WTC11 (cell line): ENCODE measurements at regions of chr16 and their contacts with region 1.

Region 1: DNA sequence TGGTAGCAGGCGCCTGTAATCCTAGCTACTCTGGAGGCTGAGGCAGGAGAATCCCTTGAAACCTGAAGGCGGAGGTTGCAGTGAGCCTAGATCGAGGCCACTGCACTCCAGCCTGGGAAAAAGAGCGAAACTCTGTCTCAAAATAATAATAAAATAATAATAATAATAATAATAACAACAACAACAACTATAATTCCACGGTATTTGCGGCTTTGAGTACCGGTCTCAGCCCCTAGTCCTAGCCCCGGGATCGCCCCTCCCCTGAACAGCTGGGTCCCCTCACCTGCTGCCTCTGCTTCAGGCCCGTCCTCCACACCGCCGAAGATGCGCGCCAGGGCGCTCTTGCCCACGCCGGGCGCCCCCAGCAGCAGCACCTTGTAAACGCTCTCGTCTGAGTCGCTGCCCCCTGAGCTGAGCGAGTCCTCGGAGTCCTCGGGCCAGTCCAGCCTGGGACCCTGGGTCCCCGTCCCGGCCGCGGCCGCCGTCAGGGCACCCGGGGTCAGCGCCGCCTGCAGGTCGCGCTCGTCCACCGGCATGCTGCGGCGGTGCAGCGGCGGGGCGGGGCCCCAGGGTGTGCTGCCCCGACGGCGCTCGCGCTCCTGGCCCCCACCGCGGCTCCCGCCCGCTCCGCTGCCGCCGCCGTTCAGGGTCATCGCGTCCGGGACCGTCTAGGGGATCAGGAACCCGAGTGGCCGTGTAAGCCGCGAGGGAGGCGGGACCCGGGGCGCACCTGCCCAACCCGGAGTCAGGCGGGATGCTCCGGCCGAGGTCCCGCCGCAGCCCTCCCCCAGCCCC is 611 bp downstream of the RRAD start:
- DNase-seq: peak; percentile 74
- ATAC-seq: peak; percentile 85
- H3K4me3 Mint-ChIP-seq: peak overlapping the region; percentile 73
- H3K27ac Mint-ChIP-seq: no peak overlapping the region
- H3K4me1 Mint-ChIP-seq: peaks cover 7% of the 10 kb centered on the region; the same call in 1 of the 2 replicates
- H3K27me3 Mint-ChIP-seq: peaks cover 59% of the 10 kb centered on the region
- CTCF ChIP-seq: no peak

Region 2: DNA sequence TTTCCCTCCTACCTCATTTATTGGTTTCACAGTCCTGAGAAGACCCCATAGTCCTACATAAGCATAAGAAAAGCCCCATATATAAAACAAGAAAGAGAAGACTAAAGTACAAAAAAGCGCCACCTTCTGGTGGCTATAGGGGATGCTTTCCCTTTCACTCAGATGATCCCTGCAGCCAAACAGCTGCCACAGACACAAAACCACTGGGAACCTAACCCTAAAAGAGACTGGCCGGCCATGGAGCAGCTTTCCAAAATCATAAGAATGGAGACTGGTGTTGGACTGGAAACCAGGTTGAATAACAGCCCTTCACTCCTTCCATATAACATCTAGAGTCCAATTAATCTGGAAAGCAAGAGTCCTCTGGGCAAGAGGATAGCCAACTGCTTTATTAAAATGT is 184.7 kb before region 1 on chr16:
- CTCF ChIA-PET with region 1: no interaction called
- POLR2A ChIA-PET with region 1: no interaction called
- DNase-seq: peak; percentile 40
- ATAC-seq: peak; percentile 85
- H3K4me3 Mint-ChIP-seq: no peak overlapping the region
- H3K27ac Mint-ChIP-seq: peak overlapping the region; percentile 90
- H3K4me1 Mint-ChIP-seq: peaks cover 18% of the 10 kb centered on the region
- H3K27me3 Mint-ChIP-seq: no peaks in the 10 kb centered on the region
- CTCF ChIP-seq: peak; percentile 61

Region 3: GRCh38 chr16:66880288-66881013 is 44.3 kb before region 1 on chr16 and contains the start of gene PDP2:
- CTCF ChIA-PET with region 1: interaction called, 17 read pairs
- POLR2A ChIA-PET with region 1: no interaction called
- DNase-seq: peak; percentile 97
- ATAC-seq: peak; percentile 99
- H3K4me3 Mint-ChIP-seq: peak within 1 kb of the TSS; percentile 95
- H3K27ac Mint-ChIP-seq: peak within 1 kb of the TSS; percentile 93
- H3K4me1 Mint-ChIP-seq: peaks cover 9% of the 10 kb centered on the region
- H3K27me3 Mint-ChIP-seq: peaks cover 11% of the 10 kb centered on the region
- CTCF ChIP-seq: no peak
- total RNA-seq, gene PDP2: 26.4 to 28.4 TPM (median 27.0 TPM) in 3 replicates

Region 4: GRCh38 chr16:66905633-66906539 is 18.8 kb before region 1 on chr16:
- CTCF ChIA-PET with region 1: interaction called, 57 read pairs
- POLR2A ChIA-PET with region 1: no interaction called
- DNase-seq: peak; percentile 55
- ATAC-seq: peak; percentile 90
- H3K4me3 Mint-ChIP-seq: no peak overlapping the region
- H3K27ac Mint-ChIP-seq: peak overlapping the region; percentile 88
- H3K4me1 Mint-ChIP-seq: peaks cover 5% of the 10 kb centered on the region; the same call in 1 of the 2 replicates
- H3K27me3 Mint-ChIP-seq: peaks cover 15% of the 10 kb centered on the region
- CTCF ChIP-seq: no peak

Region 5: GRCh38 chr16:66911112-66911511 is 13.6 kb before region 1 on chr16:
- CTCF ChIA-PET with region 1: interaction called, 57 read pairs
- POLR2A ChIA-PET with region 1: no interaction called
- DNase-seq: no peak
- ATAC-seq: no peak
- H3K4me3 Mint-ChIP-seq: no peak overlapping the region
- H3K27ac Mint-ChIP-seq: no peak overlapping the region
- H3K4me1 Mint-ChIP-seq: no peaks in the 10 kb centered on the region
- H3K27me3 Mint-ChIP-seq: peaks cover 13% of the 10 kb centered on the region
- CTCF ChIP-seq: no peak

Region 6: DNA sequence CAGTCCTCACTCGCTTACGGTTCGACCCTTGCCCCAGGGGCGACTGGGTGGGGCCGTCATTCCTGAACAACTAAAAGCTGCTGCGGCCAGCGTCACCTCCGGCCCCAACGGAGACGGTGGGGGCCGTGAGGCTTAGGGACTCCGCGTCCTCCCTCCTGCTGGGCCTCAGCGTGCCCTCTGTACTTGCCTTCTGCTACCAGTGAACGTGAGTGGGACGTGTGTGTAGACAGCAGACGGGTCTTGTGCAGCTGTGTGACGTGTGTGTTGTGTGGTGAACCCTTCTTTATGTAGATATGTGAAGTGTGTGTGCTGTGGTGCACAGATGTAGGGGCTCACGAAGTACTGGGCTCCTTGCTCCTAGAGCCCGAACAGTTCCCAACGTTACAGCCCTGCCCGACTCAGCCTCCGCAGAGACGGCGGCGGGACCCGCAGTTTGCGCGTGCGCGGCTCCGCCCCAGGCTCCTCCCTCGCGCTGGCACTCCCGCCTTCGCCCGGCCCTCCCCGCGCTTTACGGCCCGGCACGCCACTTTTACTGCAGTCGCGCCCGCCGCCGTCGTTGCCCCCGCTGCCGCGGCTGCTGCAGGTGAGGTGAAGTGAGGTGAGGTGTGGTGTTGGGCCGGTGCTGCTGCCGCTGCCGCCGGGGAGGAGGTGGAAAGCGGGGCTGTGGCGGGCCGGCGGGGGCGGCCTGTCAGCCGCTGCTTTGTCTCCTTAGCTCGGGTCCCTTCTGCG is 184.8 kb after region 1 on chr16 and contains the start of gene PHAF1:
- CTCF ChIA-PET with region 1: no interaction called
- POLR2A ChIA-PET with region 1: no interaction called
- DNase-seq: peak; percentile 98
- ATAC-seq: peak; percentile 96
- H3K4me3 Mint-ChIP-seq: peak within 1 kb of the TSS; percentile 99
- H3K27ac Mint-ChIP-seq: peak within 1 kb of the TSS; percentile 93
- H3K4me1 Mint-ChIP-seq: peaks cover 17% of the 10 kb centered on the region
- H3K27me3 Mint-ChIP-seq: 0 out of 2 replicates have a peak, but pooled peaks cover 5% of the 10 kb centered on the region
- CTCF ChIP-seq: no peak
- total RNA-seq, gene PHAF1: 16.9 to 18.8 TPM (median 17.4 TPM) in 3 replicates